ENCODE measurements at regions of chr1 and their contacts with region 1.

Region 1: DNA sequence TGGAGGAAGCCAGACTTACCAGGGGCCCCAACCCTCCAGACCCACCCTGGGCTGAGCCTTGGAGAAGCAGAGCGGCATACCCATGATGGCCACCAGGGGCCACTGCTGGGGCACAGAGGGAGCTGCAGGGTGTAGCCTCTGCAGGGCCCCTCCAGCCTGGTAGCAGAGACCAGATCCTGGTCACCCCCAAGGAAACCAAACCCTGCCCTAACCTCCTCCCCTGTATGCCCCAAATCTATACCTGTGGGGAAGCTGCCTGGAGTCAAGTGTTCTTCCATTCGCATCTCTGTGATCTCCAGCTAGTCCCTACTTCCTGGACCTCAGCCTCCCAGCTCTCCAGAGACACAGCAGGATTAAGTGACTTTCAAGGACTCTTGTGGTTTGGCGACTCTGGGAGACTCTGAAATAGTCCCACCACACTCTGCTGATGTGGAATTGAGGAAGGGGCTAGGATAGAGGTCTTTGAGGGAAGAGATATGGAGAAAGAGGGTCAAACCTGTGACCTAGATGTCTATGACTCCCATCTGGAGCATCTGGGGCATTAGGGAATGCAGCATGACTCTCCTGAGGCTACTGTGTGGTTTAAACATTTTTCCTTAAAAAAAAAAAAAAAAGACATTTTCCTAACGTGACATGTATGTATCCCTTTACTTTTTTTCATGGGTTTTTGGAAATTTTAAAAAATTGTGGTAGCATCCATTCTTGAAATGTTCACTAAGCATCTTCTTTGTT is 119.2 kb upstream of the IPO9 start:
- DNase-seq: peak; percentile 61
- H3K4me3 Mint-ChIP-seq: no peak overlapping the region
- H3K27ac Mint-ChIP-seq: no peak overlapping the region
- H3K4me1 Mint-ChIP-seq: peaks cover 2% of the 10 kb centered on the region
- H3K27me3 Mint-ChIP-seq: no peaks in the 10 kb centered on the region

Region 2: GRCh38 chr1:201329286-201329685 is 380.4 kb before region 1 on chr1:
- CTCF ChIA-PET with region 1: no interaction called
- POLR2A ChIA-PET with region 1: no interaction called
- DNase-seq: no peak
- H3K4me3 Mint-ChIP-seq: no peak overlapping the region
- H3K27ac Mint-ChIP-seq: no peak overlapping the region
- H3K4me1 Mint-ChIP-seq: no peaks in the 10 kb centered on the region
- H3K27me3 Mint-ChIP-seq: peaks cover 5% of the 10 kb centered on the region

Region 3: GRCh38 chr1:201724039-201724765 is 14.5 kb after region 1 on chr1:
- CTCF ChIA-PET with region 1: interaction called, 11 read pairs
- POLR2A ChIA-PET with region 1: no interaction called
- DNase-seq: no peak
- H3K4me3 Mint-ChIP-seq: no peak overlapping the region
- H3K27ac Mint-ChIP-seq: no peak overlapping the region
- H3K4me1 Mint-ChIP-seq: peaks cover 2% of the 10 kb centered on the region
- H3K27me3 Mint-ChIP-seq: peaks cover 20% of the 10 kb centered on the region

Region 4: GRCh38 chr1:201792534-201793305 is 83.0 kb after region 1 on chr1:
- CTCF ChIA-PET with region 1: interaction called, 50 read pairs
- POLR2A ChIA-PET with region 1: no interaction called
- DNase-seq: peak; percentile 54
- H3K4me3 Mint-ChIP-seq: no peak overlapping the region
- H3K27ac Mint-ChIP-seq: no peak overlapping the region
- H3K4me1 Mint-ChIP-seq: peaks cover 15% of the 10 kb centered on the region
- H3K27me3 Mint-ChIP-seq: peaks cover 2% of the 10 kb centered on the region